ENCODE measurements at regions of chr6 and their contacts with region 1.

Region 1: GRCh38 chr6:12289933-12290820 is at the start of gene EDN1:
- DNase-seq: peak; percentile 100
- H3K4me3 ChIP-seq: peak within 1 kb of the TSS; percentile 91 to 98 (median 96)
- H3K27ac ChIP-seq: peak within 1 kb of the TSS; percentile 98
- H3K4me1 ChIP-seq: peaks cover 26% of the 10 kb centered on the region
- H3K27me3 ChIP-seq: no peaks in the 10 kb centered on the region
- CTCF ChIP-seq: no peak
- POLR2A ChIP-seq: peak; percentile 100
- total RNA-seq, gene EDN1: 493 and 514 TPM in 2 replicates

Region 2: DNA sequence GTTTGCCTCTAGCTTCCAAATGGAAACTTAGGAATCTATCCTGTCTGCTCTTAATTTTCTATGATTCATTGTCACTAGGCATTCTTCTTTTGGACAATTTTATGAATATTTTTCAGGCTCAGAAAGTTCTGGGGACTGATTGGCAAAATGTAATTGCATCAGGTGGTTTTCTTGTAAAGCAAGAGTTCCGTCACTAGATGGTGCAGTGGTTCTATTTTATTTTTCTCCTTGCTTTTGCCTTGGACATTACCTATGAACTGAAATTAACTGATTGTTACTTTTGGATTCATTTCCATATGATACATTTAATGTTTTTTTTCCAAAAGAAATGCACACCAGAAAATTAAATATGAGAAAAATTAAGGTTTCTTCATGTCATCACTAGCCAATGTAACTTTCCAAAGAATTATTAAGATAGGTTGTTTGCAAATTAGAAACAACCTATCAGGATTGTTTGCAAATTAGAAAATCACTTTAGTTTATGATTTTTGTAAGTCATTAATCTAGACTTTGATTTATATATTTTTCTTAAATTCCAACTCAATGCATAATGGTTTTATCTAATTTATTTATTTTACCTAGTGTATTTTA is 704.7 kb before region 1 on chr6:
- CTCF ChIA-PET with region 1: interaction called, 37 read pairs
- POLR2A ChIA-PET with region 1: interaction called, 10 read pairs
- dilution Hi-C with region 1: no loop called
- intact Hi-C with region 1: loop called (anchors 1 kb)
- DNase-seq: peak; percentile 83
- H3K4me3 ChIP-seq: no peak overlapping the region
- H3K27ac ChIP-seq: peak overlapping the region; percentile 79
- H3K4me1 ChIP-seq: peaks cover 29% of the 10 kb centered on the region
- H3K27me3 ChIP-seq: no peaks in the 10 kb centered on the region
- CTCF ChIP-seq: peak; percentile 41 to 42
- POLR2A ChIP-seq: no peak

Region 3: GRCh38 chr6:11700118-11700718 is 590.0 kb before region 1 on chr6:
- CTCF ChIA-PET with region 1: interaction called, 4 read pairs
- POLR2A ChIA-PET with region 1: interaction called, 4 read pairs
- dilution Hi-C with region 1: no loop called
- intact Hi-C with region 1: loop called (anchors 1 kb)
- DNase-seq: peak; percentile 47
- H3K4me3 ChIP-seq: no peak overlapping the region
- H3K27ac ChIP-seq: no peak overlapping the region
- H3K4me1 ChIP-seq: no peaks in the 10 kb centered on the region
- H3K27me3 ChIP-seq: no peaks in the 10 kb centered on the region
- CTCF ChIP-seq: peak in 1 of 2 donors; percentile 16
- POLR2A ChIP-seq: no peak

Region 4: DNA sequence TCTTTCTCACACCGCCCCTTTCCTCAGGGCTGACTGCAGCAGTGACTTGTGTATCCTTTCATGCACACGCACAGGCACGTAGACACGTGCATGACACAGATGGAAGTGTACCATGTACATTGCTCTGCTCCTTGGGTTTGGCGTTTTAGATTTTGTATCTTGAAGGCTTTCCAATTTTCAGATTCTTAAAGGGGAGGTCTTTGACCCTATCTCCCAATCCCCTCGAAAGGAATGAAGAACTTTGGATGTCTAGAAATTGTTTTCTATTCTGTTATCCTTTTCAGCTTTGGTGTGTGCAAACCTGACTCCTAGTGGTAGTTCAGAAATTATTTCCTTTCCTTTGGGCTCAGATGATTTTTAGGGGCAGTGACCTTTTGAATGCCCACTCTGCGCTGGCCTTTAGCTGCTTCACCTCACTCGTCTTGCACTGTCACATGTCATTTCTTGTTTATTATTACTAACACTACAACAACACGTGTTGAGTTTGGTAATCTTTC is 215.1 kb before region 1 on chr6:
- CTCF ChIA-PET with region 1: no interaction called
- POLR2A ChIA-PET with region 1: no interaction called
- dilution Hi-C with region 1: no loop called
- intact Hi-C with region 1: loop called (anchors 10 kb)
- DNase-seq: peak; percentile 34
- H3K4me3 ChIP-seq: no peak overlapping the region
- H3K27ac ChIP-seq: no peak overlapping the region
- H3K4me1 ChIP-seq: peaks cover 22% of the 10 kb centered on the region
- H3K27me3 ChIP-seq: no peaks in the 10 kb centered on the region
- CTCF ChIP-seq: peak; percentile 13 to 18
- POLR2A ChIP-seq: no peak

Region 5: GRCh38 chr6:12313992-12314805 is 24.0 kb after region 1 on chr6:
- CTCF ChIA-PET with region 1: interaction called, 3 read pairs
- POLR2A ChIA-PET with region 1: interaction called, 11 read pairs
- dilution Hi-C with region 1: no loop called
- intact Hi-C with region 1: no loop called
- DNase-seq: peak; percentile 89
- H3K4me3 ChIP-seq: no peak overlapping the region
- H3K27ac ChIP-seq: peak overlapping the region; percentile 77
- H3K4me1 ChIP-seq: peaks cover 23% of the 10 kb centered on the region
- H3K27me3 ChIP-seq: no peaks in the 10 kb centered on the region
- CTCF ChIP-seq: no peak
- POLR2A ChIP-seq: no peak

Region 6: DNA sequence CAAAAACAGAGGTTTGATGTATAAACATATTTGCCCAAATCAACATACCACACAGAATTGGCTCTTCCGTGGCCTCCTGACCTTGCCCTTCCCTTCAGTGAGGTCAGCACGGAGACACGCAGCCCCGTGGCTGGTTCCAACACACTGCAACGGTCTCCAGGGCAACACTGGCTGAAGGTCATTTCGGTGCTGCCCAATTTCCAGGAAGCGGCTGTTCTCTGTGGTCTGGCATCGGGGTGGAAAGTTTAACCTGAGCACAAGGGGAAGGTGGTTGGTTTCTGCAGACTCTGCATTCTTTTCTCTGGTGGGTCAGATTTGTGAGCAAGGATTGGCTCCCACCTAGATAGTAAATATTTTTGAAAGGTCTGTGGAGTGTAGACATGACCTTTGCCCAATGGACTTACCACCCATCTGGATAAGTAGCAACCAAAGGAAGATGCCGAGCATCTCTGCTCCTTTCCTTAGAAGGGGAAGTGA is 248.7 kb after region 1 on chr6:
- CTCF ChIA-PET with region 1: interaction called, 5 read pairs
- POLR2A ChIA-PET with region 1: no interaction called
- dilution Hi-C with region 1: no loop called
- intact Hi-C with region 1: loop called (anchors 2 kb)
- DNase-seq: peak; percentile 89
- H3K4me3 ChIP-seq: no peak overlapping the region
- H3K27ac ChIP-seq: peak overlapping the region; percentile 87
- H3K4me1 ChIP-seq: peaks cover 51% of the 10 kb centered on the region
- H3K27me3 ChIP-seq: no peaks in the 10 kb centered on the region
- CTCF ChIP-seq: no peak
- POLR2A ChIP-seq: peak; percentile 38

Region 7: DNA sequence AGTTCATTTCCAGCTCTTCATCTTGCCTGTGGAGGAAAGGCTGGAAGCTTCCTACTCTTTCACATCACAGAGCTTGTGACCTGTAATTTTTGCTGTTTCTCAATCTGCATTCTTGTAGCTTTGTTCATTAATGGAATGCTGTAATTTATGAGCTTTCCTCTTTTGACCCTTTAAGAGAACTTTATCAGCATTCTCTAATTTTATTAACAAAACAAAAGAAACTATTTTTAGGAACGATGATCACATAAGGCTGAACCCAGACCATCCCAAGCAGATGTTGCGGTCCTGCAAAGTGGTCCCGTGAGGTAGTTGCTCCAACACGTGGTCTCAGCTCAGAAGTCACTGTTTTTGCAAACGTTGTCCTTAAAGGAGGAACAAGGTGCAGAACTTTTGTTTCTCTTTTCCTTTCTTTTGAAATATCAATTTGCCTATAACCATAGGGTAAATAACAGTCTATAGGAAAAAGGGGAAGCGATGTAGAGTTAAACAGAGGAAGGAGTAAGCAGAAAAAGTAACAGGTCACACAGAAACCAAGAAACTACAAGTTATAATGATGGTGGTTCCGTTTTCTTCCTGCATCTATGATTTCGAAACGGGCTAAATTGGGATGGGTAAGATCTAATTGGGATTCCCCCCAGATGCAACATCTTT is 305.1 kb after region 1 on chr6:
- CTCF ChIA-PET with region 1: no interaction called
- POLR2A ChIA-PET with region 1: no interaction called
- dilution Hi-C with region 1: loop called (anchors 10 kb)
- intact Hi-C with region 1: no loop called
- DNase-seq: peak; percentile 58
- H3K4me3 ChIP-seq: no peak overlapping the region
- H3K27ac ChIP-seq: peak overlapping the region; percentile 36
- H3K4me1 ChIP-seq: peaks cover 9% of the 10 kb centered on the region
- H3K27me3 ChIP-seq: no peaks in the 10 kb centered on the region
- CTCF ChIP-seq: no peak
- POLR2A ChIP-seq: no peak